Dorsolateral prefrontal cortex (tissue), 120 donors: ENCODE measurements at regions of chr7 and their contacts with region 1.

Region 1: GRCh38 chr7:103651593-103652377 is 205.8 kb upstream of the SLC26A5 start:
- DNase-seq: no peak
- H3K4me3 ChIP-seq: no peak overlapping the region
- H3K27ac ChIP-seq: no peak overlapping the region
- H3K27me3 ChIP-seq: peaks cover 0 to 3% (median 0%) of the 10 kb centered on the region in 45 donors
- CTCF ChIP-seq: no peak

Region 2: DNA sequence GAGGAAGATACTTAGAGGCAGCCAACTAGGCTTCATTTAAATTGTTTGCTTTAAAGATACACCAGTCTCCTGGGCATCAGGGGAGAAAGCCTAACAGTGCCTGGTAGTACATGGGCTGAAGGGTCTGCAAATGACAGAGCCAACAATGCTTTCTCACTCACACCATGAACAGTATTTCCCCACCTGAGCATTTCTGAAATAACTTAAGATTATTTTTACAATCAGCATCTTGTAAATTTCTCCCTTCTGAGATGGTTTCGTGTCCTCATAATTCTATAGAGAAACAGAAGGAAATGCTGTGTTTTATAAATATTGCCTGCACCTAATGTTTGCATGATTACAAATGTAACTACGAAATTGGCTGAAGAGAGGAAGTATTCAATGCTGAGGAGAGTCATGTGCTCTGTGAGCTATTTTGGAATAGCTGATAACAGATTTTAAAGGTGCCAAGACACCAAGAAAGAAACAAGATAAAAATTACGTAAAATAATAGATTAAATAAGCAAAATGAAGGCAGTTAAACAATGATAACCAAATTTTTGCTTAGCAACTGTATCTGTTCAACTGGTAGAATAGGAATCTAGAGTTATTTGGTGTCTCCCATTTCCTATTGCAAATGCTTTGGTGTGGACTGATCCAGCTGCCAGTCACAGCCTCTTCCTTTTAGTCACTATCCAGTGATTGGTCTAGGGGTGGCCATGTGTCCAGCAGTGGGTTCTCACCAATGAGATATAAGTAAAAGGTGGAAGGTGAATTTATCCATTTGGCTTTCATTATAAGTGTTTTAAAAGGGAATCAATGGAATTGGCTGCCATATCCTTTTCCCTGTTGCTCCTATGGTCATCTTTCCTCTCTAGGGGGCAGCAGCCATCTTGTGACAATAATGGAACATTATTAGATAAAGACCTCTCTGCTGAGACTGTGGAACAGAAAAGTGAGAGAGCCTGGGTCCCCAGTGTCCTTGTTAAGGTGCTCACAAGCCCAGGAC is 37.8 kb before region 1 on chr7:
- intact Hi-C with region 1: no loop called
- DNase-seq: no peak
- H3K4me3 ChIP-seq: no peak overlapping the region
- H3K27ac ChIP-seq: peak overlapping the region in 1 of 59 donors; percentile 5
- H3K27me3 ChIP-seq: no peaks in the 10 kb centered on the region
- CTCF ChIP-seq: no peak

Region 3: DNA sequence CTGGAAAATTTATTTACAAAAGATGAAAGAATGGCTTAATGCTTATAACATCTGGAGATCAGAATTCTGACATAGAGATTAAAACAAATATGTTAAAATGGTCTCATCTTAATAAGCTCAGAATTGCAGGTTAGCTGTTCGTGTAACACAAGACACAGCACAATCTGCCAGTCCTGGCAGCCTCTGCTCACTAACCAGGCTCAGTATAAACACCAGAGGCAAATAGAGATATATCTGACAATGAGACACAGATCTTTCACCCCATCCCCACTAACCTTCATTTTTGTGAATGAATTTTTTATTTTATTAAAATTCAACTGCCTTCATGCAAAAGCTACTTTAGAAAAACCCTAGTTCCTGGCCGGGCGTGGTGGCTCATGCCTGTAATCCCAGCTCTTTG is 285.9 kb after region 1 on chr7:
- intact Hi-C with region 1: loop called in 1 of 2 experiments (anchors 5 kb)
- DNase-seq: no peak
- H3K4me3 ChIP-seq: no peak overlapping the region
- H3K27ac ChIP-seq: no peak overlapping the region
- H3K27me3 ChIP-seq: peaks cover 0 to 28% (median 0%) of the 10 kb centered on the region in 45 donors
- CTCF ChIP-seq: no peak

Region 4: GRCh38 chr7:104686286-104686685 is 1034.5 kb after region 1 on chr7:
- intact Hi-C with region 1: no loop called
- DNase-seq: no peak
- H3K4me3 ChIP-seq: no peak overlapping the region
- H3K27ac ChIP-seq: no peak overlapping the region
- H3K27me3 ChIP-seq: peaks cover 0 to 12% (median 0%) of the 10 kb centered on the region in 45 donors
- CTCF ChIP-seq: no peak